ENCODE measurements at regions of chr6 and their contacts with region 1.

Region 1: GRCh38 chr6:29737707-29738630 is 14.7 kb downstream of the HLA-F start:
- DNase-seq: peak; percentile 52 to 78 (median 60)
- ATAC-seq: peak; percentile 96
- H3K4me3 ChIP-seq: no peak overlapping the region
- H3K27ac ChIP-seq: no peak overlapping the region
- H3K4me1 ChIP-seq: no peaks in the 10 kb centered on the region
- H3K27me3 ChIP-seq: 0 out of 5 replicates have a peak, but pooled peaks cover 0 to 4% of the 10 kb centered on the region in 2 experiments
- CTCF ChIP-seq: peak; percentile 84 to 86 (median 85)
- EP300 ChIP-seq: no peak
- POLR2A ChIP-seq: no peak
- RAD21 ChIP-seq: peak; percentile 41 to 90

Region 2: DNA sequence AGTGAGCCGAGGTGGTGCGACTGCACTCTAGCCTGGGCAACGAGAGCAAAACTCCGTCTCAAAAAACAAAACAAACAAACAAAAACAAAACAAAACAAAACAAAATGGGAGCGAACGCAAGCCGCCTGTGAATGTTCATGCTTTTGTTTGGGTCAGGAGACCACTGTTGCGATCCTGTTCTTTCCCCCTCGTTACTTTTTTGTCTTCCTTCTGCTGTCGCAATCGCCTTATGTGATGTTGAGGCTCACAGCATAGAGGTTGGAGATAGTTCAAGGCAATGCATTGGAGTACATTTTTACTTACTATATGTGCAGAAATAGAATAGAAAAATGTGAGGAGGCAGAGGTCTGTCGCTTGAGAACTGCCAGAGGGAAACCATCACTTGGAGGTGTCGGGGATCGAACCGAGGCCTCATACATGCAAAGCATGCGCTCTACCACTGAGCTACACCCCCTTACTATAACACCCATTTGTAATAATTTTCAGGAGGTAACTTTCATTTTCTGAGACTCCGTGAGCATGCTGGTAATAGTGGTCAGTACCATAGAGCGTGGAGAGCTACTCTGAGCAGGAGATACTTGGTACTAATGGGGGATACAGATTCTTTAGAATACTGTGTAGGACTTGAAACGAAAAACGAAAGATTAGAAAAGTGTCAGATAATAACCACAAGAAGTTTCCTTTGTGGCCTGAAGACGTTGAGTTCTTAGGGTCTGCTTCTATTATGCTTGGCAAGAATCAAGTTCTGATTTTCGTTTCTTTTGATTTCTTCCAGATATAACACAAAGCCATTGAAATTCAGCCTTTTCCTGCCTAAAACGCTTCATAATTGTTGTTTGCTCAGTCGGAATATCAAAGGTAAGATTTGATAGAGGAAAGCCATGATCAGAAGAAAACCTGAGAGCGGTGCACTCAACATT is 935.3 kb before region 1 on chr6:
- CTCF ChIA-PET with region 1: no interaction called
- POLR2A ChIA-PET with region 1: no interaction called
- in situ Hi-C with region 1: no loop called
- intact Hi-C with region 1: no loop called
- DNase-seq: peak; percentile 68 to 91 (median 72)
- ATAC-seq: peak; percentile 91
- H3K4me3 ChIP-seq: peak overlapping the region; percentile 49
- H3K27ac ChIP-seq: no peak overlapping the region
- H3K4me1 ChIP-seq: peaks cover 4 to 10% of the 10 kb centered on the region in 2 experiments; a peak in 3 of 5 replicates
- H3K27me3 ChIP-seq: no peaks in the 10 kb centered on the region
- CTCF ChIP-seq: no peak
- EP300 ChIP-seq: peak; percentile 54; the same call in 1 of the 2 replicates
- POLR2A ChIP-seq: no peak
- RAD21 ChIP-seq: no peak

Region 3: DNA sequence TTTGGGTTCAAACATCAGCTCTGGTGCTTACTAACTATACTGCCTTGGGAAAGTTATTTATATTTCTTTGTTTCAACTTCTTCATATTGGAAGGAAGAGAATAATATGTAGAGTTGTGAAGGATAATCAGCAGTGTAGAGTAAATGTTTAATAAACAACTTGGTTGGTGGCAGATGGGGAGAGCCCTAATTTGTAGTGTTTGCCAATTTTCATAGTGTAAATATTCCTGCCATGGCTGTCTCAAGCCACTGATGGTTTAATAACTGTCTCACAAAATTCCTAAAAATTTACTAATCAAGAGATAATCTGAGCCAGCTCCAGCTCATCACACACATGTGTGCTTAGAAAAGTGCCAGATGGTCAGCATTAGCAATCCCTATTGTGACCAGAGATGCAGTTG is 153.1 kb before region 1 on chr6 and contains the start of gene OR2H2:
- CTCF ChIA-PET with region 1: no interaction called
- POLR2A ChIA-PET with region 1: no interaction called
- in situ Hi-C with region 1: no loop called
- intact Hi-C with region 1: no loop called
- DNase-seq: no peak
- ATAC-seq: no peak
- H3K4me3 ChIP-seq: no peak within 1 kb of the TSS
- H3K27ac ChIP-seq: no peak within 1 kb of the TSS
- H3K4me1 ChIP-seq: no peaks in the 10 kb centered on the region
- H3K27me3 ChIP-seq: peaks cover 2 to 23% of the 10 kb centered on the region in 2 experiments; a peak in 3 of 5 replicates
- CTCF ChIP-seq: no peak
- EP300 ChIP-seq: no peak
- POLR2A ChIP-seq: no peak
- RAD21 ChIP-seq: no peak
- polyA plus RNA-seq, gene OR2H2: not detected

Region 4: GRCh38 chr6:29752451-29753308 is 14.7 kb after region 1 on chr6:
- CTCF ChIA-PET with region 1: interaction called, 7 read pairs
- POLR2A ChIA-PET with region 1: interaction called, 3 read pairs
- in situ Hi-C with region 1: no loop called
- intact Hi-C with region 1: loop called (anchors 1 kb)
- DNase-seq: peak; percentile 83 to 95 (median 88)
- ATAC-seq: peak; percentile 91
- H3K4me3 ChIP-seq: peak overlapping the region; percentile 51
- H3K27ac ChIP-seq: peak overlapping the region; percentile 68
- H3K4me1 ChIP-seq: peaks cover 14 to 30% of the 10 kb centered on the region in 2 experiments
- H3K27me3 ChIP-seq: peaks cover 0 to 4% of the 10 kb centered on the region in 2 experiments; a peak in 2 of 5 replicates
- CTCF ChIP-seq: peak; percentile 99 to 100 (median 100)
- EP300 ChIP-seq: no peak
- POLR2A ChIP-seq: peak; percentile 52; the same call in 1 of the 2 replicates
- RAD21 ChIP-seq: peak; percentile 75 to 90

Region 5: DNA sequence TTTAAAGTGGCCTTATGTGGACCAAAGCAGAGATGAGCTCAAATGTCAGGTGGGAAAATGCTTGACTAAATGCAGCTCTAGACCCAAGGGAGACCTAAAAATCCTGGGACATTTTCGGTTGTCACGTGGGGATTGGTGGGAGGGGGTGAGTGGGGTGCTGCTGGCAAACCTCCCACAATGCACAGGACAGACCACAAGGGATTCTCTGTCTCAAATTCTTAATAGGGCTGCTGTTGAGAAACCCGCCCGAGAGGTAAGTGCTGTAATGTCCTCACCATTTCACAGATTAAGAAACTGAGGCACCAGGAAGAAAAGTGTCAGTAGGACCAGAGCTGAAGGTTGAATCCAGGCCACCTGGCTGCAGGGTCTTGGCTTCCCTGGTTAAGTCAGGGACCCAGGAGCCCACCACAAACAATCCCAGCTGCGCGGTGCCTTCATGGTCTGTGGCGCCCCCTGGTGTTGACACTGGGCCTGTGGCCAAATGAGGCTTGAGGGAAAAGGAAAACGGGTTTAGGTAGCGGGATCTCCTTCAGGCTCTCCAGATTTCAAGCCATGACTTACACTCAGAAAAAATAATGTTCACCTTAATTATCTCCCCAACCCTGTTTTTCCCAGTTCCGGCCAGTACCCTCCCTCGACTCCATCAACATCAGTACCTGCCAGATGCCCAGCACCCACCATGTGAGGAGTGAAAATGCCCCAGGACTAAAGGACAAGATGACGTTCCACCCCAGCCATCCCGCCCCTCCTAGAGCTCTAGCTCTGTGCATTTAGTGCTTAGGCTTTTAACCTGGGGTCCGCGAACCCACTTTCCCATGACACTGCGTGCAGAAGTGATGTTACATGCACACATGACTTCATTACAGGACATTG is 96.8 kb after region 1 on chr6:
- CTCF ChIA-PET with region 1: interaction called, 18 read pairs
- POLR2A ChIA-PET with region 1: no interaction called
- in situ Hi-C with region 1: loop called (anchors 25 kb)
- intact Hi-C with region 1: loop called (anchors 1 kb)
- DNase-seq: peak; percentile 30 to 44 (median 42)
- ATAC-seq: peak; percentile 88
- H3K4me3 ChIP-seq: no peak overlapping the region
- H3K27ac ChIP-seq: no peak overlapping the region
- H3K4me1 ChIP-seq: no peaks in the 10 kb centered on the region
- H3K27me3 ChIP-seq: peaks cover 0 to 12% of the 10 kb centered on the region in 2 experiments; a peak in 4 of 5 replicates
- CTCF ChIP-seq: peak; percentile 73 to 83 (median 75)
- EP300 ChIP-seq: no peak
- POLR2A ChIP-seq: no peak
- RAD21 ChIP-seq: peak; percentile 48 to 51

Region 6: GRCh38 chr6:30006170-30007131 is 268.5 kb after region 1 on chr6:
- CTCF ChIA-PET with region 1: no interaction called
- POLR2A ChIA-PET with region 1: interaction called, 6 read pairs
- in situ Hi-C with region 1: loop called (anchors 10 kb)
- intact Hi-C with region 1: loop called (anchors 10 kb)
- DNase-seq: no peak
- ATAC-seq: no peak
- H3K4me3 ChIP-seq: no peak overlapping the region
- H3K27ac ChIP-seq: no peak overlapping the region
- H3K4me1 ChIP-seq: peaks cover 0 to 10% of the 10 kb centered on the region in 2 experiments; a peak in 1 of 5 replicates
- H3K27me3 ChIP-seq: no peaks in the 10 kb centered on the region
- CTCF ChIP-seq: no peak
- EP300 ChIP-seq: no peak
- POLR2A ChIP-seq: no peak
- RAD21 ChIP-seq: no peak

Region 7: GRCh38 chr6:30013291-30013922 is 275.4 kb after region 1 on chr6:
- CTCF ChIA-PET with region 1: no interaction called
- POLR2A ChIA-PET with region 1: interaction called, 6 read pairs
- in situ Hi-C with region 1: loop called (anchors 10 kb)
- intact Hi-C with region 1: loop called (anchors 10 kb)
- DNase-seq: peak; percentile 32 to 64 (median 52)
- ATAC-seq: peak; percentile 89
- H3K4me3 ChIP-seq: no peak overlapping the region
- H3K27ac ChIP-seq: no peak overlapping the region
- H3K4me1 ChIP-seq: no peaks in the 10 kb centered on the region
- H3K27me3 ChIP-seq: no peaks in the 10 kb centered on the region
- CTCF ChIP-seq: peak; percentile 78 to 89 (median 83)
- EP300 ChIP-seq: no peak
- POLR2A ChIP-seq: no peak
- RAD21 ChIP-seq: peak; percentile 46 to 54

Measured in K562 (cell line).